B cell (primary cell): ENCODE measurements at regions of chr1 and their contacts with region 1.

Region 1: DNA sequence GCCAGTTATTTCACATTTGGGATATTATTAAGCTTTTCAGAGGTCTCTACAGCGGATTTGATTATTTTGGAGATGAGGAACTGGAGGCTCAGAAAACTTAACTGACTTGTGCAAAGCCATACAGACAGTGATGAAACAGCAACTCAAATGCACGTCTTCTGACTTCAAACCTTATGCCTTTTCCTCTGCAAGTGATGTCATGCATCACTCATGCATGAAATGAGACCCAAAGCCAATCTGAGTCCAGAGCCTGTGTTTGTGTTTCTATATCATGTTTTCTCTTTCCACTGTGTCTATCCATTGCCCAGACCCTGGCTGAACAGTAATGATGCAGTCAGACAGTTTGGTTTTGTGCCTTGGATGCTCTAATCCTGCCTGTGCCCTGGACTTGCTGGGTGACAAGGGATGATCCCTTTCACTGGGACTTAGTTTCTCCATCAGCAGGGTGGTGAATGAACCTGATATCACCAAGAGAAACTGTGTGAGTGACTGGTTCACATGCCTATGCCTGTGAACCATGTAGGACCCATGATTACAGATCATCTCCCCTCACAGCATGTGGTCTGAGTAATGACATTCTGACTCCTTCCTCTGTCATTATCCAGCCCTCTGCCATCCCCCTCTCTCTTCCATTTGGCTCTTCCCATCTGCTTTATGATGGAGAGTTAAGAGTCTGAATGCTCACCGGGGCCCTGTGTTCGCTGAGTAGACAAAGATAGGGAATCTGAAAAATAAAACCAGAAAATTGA is 33.4 kb downstream of the SLAMF6 start:
- DNase-seq: peak; percentile 78
- ATAC-seq: peak; percentile 21
- H3K4me3 ChIP-seq: no peak overlapping the region
- H3K4me3 Mint-ChIP-seq: peak overlapping the region; percentile 81
- H3K27ac ChIP-seq: peak overlapping the region; percentile 85 to 93
- H3K27ac Mint-ChIP-seq: no peak overlapping the region
- H3K4me1 ChIP-seq: peaks cover 82 to 84% of the 10 kb centered on the region in 2 donors
- H3K4me1 Mint-ChIP-seq: peaks cover 4% of the 10 kb centered on the region
- H3K27me3 ChIP-seq: no peaks in the 10 kb centered on the region
- H3K27me3 Mint-ChIP-seq: no peaks in the 10 kb centered on the region
- CTCF ChIP-seq: no peak

Region 2: DNA sequence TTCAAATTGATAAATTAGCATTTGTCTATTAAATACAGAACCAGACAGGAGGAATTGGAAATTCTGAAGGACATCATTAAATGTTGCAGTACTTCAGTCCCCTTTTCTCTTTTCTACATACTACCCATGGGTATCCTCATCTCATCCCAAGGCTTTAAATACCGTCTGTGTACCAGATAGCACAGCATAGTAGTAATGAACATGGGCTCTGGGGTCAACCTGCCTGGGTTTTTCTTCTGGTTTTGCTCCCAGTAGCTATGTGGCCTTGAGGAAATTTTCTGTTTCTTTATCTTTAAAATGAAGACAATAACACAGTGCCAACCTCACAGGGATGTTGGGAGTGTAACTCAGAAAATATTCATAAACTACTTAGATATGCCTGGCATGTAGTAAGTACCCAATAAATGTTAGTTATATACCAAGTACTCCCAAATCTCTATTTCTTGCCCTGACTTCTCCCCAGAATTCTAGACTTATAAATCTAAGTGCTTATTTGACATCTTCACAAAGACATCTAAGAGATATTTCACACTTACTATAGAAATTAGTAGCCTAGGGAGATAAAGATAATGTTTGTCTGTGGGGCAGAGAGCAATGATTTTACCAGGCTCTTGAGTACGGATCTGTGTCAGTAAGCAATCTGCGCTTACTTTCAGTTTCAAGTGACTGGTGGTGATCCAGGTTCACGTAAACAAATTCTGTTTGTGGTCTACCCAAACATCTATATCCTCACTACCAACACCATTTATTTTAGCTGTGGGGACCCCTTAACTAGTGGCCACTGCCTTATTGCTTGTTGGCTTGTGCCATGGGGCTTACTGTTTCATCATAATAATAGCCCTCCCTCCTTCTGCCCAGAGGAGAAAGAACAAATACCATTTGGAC is 52.0 kb before region 1 on chr1:
- CTCF ChIA-PET with region 1: interaction called, 62 read pairs
- POLR2A ChIA-PET with region 1: interaction called, 17 read pairs
- intact Hi-C with region 1: loop called (anchors 1 kb)
- DNase-seq: peak; percentile 73
- ATAC-seq: peak; percentile 86
- H3K4me3 ChIP-seq: peak overlapping the region; percentile 5 to 56 (median 36)
- H3K4me3 Mint-ChIP-seq: peak overlapping the region; percentile 89
- H3K27ac ChIP-seq: peak overlapping the region; percentile 72 to 92
- H3K27ac Mint-ChIP-seq: peak overlapping the region; percentile 98
- H3K4me1 ChIP-seq: peaks cover 38 to 40% of the 10 kb centered on the region in 2 donors
- H3K4me1 Mint-ChIP-seq: peaks cover 66% of the 10 kb centered on the region
- H3K27me3 ChIP-seq: no peaks in the 10 kb centered on the region
- H3K27me3 Mint-ChIP-seq: no peaks in the 10 kb centered on the region
- CTCF ChIP-seq: no peak

Region 3: DNA sequence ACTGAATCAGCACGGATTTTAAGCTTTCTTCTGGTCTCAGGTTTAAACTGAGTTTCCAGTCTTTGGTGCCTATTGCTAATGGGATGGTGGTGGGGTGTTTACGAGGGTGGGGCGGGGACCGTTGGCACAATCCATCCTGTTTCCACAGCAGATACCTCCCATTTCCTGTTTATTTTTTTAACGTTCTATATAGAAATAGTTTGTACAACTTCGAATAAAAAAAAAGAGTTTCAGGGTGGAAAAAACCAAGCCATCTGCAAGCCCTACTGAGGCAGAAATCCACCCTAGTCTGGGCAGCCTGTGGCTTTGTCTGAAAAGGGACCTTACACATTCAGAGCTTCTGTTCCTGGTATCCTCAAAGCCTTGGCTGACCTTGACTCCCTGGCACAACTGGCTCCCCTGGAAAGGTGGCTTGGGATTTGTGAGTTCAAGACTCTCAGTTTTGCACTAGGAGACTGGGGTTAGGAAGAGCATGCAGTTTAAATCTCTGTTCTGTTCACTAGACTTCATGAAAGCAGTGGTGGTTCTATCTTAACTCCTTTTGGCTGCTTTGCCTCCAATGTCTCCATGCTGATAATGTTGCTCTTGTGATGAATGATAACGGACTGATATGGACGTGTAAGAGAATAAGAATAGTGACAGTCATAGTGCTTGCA is 42.6 kb before region 1 on chr1:
- CTCF ChIA-PET with region 1: interaction called, 4 read pairs
- POLR2A ChIA-PET with region 1: interaction called, 13 read pairs
- intact Hi-C with region 1: no loop called
- DNase-seq: no peak
- ATAC-seq: no peak
- H3K4me3 ChIP-seq: no peak overlapping the region
- H3K4me3 Mint-ChIP-seq: peak overlapping the region; percentile 24
- H3K27ac ChIP-seq: peak overlapping the region in 1 of 2 donors; percentile 39
- H3K27ac Mint-ChIP-seq: peak overlapping the region; percentile 72
- H3K4me1 ChIP-seq: peaks cover 43 to 44% of the 10 kb centered on the region in 2 donors
- H3K4me1 Mint-ChIP-seq: peaks cover 66% of the 10 kb centered on the region
- H3K27me3 ChIP-seq: no peaks in the 10 kb centered on the region
- H3K27me3 Mint-ChIP-seq: no peaks in the 10 kb centered on the region
- CTCF ChIP-seq: no peak

Region 4: DNA sequence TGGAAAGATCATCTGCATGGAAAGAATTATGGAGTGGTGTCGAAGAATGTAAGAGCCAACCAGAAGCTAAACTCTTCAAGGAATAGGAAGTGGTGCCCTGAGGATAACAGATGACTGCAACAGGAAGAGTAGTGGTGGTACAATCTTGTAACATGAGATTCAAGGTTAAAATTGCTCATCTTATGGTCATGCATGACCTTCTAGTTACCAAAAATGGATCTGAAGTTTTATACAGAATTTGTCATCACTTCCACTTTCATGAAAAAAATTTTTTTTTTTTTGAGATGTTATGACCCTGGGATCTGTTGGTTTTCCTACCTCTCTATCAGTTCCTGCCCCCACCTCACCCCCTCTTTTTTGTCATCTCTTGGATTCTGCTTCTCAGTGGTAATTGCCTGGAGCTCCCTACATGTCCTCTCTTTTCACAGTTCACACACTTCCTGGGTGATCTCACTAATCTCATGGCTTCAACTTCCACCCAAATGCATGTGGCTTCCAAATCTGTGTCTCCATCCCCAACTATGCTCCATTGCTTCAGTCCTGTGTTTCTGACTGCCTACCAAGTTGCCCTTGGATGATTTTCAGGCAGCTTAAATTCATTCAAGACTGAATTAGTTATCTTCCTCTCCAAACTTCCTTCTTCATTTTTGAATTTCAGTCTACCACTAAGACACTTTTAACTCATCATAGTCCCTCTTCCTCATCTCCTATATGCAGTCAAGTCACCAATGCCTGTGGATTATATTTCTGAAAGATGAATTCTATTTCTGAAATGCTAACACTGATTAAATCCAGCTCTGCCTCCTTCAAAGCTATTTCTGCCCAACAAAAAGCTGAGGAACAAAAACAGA is 15.1 kb before region 1 on chr1:
- CTCF ChIA-PET with region 1: interaction called, 11 read pairs
- POLR2A ChIA-PET with region 1: interaction called, 8 read pairs
- intact Hi-C with region 1: loop called (anchors 2 kb)
- DNase-seq: peak; percentile 54
- ATAC-seq: peak; percentile 94
- H3K4me3 ChIP-seq: peak overlapping the region in 2 of 5 experiments; percentile 20 to 42
- H3K4me3 Mint-ChIP-seq: no peak overlapping the region
- H3K27ac ChIP-seq: peak overlapping the region; percentile 78 to 87
- H3K27ac Mint-ChIP-seq: no peak overlapping the region
- H3K4me1 ChIP-seq: peaks cover 49 to 54% of the 10 kb centered on the region in 2 donors
- H3K4me1 Mint-ChIP-seq: peaks cover 26% of the 10 kb centered on the region
- H3K27me3 ChIP-seq: no peaks in the 10 kb centered on the region
- H3K27me3 Mint-ChIP-seq: no peaks in the 10 kb centered on the region
- CTCF ChIP-seq: no peak

Region 5: GRCh38 chr1:160539990-160540858 is 50.5 kb after region 1 on chr1:
- CTCF ChIA-PET with region 1: interaction called, 15 read pairs
- POLR2A ChIA-PET with region 1: interaction called, 3 read pairs
- intact Hi-C with region 1: loop called (anchors 5 kb)
- DNase-seq: peak; percentile 81
- ATAC-seq: peak; percentile 97
- H3K4me3 ChIP-seq: peak overlapping the region in 1 of 5 experiments; percentile 19
- H3K4me3 Mint-ChIP-seq: peak overlapping the region; percentile 63
- H3K27ac ChIP-seq: peak overlapping the region; percentile 72 to 90
- H3K27ac Mint-ChIP-seq: peak overlapping the region; percentile 93
- H3K4me1 ChIP-seq: peaks cover 46% of the 10 kb centered on the region in 2 donors
- H3K4me1 Mint-ChIP-seq: peaks cover 48% of the 10 kb centered on the region
- H3K27me3 ChIP-seq: no peaks in the 10 kb centered on the region
- H3K27me3 Mint-ChIP-seq: no peaks in the 10 kb centered on the region
- CTCF ChIP-seq: no peak

Region 6: GRCh38 chr1:160637821-160638539 is 148.3 kb after region 1 on chr1:
- CTCF ChIA-PET with region 1: no interaction called
- POLR2A ChIA-PET with region 1: no interaction called
- intact Hi-C with region 1: no loop called
- DNase-seq: peak; percentile 79
- ATAC-seq: peak; percentile 49
- H3K4me3 ChIP-seq: peak overlapping the region in 2 of 5 experiments; percentile 17 to 40
- H3K4me3 Mint-ChIP-seq: peak overlapping the region; percentile 65
- H3K27ac ChIP-seq: peak overlapping the region; percentile 72 to 83
- H3K27ac Mint-ChIP-seq: peak overlapping the region; percentile 88
- H3K4me1 ChIP-seq: peaks cover 70 to 82% of the 10 kb centered on the region in 2 donors
- H3K4me1 Mint-ChIP-seq: peaks cover 82% of the 10 kb centered on the region
- H3K27me3 ChIP-seq: no peaks in the 10 kb centered on the region
- H3K27me3 Mint-ChIP-seq: no peaks in the 10 kb centered on the region
- CTCF ChIP-seq: no peak

Region 7: DNA sequence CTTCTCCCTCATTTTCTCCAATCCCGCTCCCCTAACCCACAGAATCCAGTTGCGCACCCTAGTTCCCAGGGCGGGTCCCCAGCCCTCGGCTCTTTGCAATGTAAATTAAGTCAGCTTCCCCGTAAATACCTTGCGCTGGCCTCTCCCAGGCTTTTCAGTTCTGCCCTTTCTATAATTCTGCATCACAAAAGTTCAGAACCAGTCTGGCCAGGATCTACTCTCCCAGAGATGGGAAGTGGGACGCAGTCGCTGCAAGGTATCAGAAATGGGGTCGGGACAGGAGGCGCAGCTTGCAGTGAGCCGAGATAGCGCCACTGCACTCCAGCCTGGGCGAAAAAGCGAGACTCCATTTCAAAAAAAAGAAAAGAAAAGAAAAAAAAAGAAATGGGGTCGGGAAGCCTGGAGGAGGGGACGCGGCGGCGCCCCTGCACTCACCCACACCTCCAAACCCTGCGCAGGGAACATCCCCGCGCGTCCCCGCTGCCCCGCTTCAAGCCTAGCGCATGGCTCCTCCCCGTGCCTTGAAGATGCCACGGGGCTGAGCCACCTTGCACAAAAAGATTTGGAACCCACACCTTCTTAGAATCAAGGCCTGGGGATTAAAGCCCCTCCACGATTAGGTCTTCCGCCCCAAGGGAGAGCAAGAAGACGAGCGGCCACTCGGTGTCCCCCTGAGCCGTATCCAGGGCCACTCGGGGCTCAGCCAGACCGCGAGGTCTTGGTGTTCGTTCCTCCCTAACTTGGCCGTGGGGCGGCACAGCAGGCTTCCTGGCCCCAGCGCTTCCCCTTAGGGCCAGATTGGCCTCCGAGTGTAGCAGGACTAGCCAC is 492.1 kb after region 1 on chr1:
- CTCF ChIA-PET with region 1: no interaction called
- POLR2A ChIA-PET with region 1: no interaction called
- intact Hi-C with region 1: no loop called
- DNase-seq: peak; percentile 39
- ATAC-seq: peak; percentile 41
- H3K4me3 ChIP-seq: peak overlapping the region; percentile 4 to 53 (median 37)
- H3K4me3 Mint-ChIP-seq: peak overlapping the region; percentile 75
- H3K27ac ChIP-seq: no peak overlapping the region
- H3K27ac Mint-ChIP-seq: no peak overlapping the region
- H3K4me1 ChIP-seq: peaks cover 11 to 13% of the 10 kb centered on the region in 2 donors
- H3K4me1 Mint-ChIP-seq: peaks cover 11% of the 10 kb centered on the region
- H3K27me3 ChIP-seq: peaks cover 0 to 19% (median 9%) of the 10 kb centered on the region in 4 experiments
- H3K27me3 Mint-ChIP-seq: peaks cover 29% of the 10 kb centered on the region
- CTCF ChIP-seq: no peak